Colonic mucosa (tissue), 4 donors: ENCODE measurements at regions of chr3 and their contacts with region 1.

Region 1: GRCh38 chr3:102536456-102536855 is 101.6 kb downstream of the ZPLD1 start:
- DNase-seq: no peak
- H3K4me3 ChIP-seq: no peak overlapping the region
- H3K27ac ChIP-seq: no peak overlapping the region
- H3K4me1 ChIP-seq: no peaks in the 10 kb centered on the region
- H3K27me3 ChIP-seq: no peaks in the 10 kb centered on the region
- CTCF ChIP-seq: peak; percentile 26

Region 2: DNA sequence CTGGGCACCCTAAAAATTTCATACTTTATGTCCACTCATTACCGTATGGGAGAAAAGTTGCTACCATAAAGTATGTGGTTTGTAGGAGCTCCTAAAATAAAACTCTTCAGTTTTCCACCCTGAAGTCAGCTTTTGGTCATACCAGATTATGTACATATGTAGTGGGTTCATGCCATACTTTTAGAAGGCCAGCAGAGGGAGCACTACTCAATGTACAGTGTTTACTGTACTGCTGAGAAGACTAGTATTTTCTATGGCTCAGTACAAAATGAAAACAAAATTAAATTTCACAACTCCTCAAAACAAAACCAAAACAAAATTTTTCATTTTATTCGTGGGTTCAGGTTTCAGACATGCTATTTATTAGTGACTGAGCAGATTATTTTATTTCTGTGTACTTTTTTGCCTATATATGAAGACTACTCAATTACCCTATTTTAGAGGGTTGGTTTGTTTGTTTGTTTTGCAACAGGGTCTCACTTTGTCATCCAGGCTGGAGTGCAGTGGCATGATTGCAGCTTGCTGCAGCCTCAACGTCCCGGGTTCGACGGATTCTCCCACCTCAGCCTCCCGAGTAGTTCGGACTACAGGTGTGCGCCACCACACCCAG is 733.2 kb before region 1 on chr3:
- intact Hi-C with region 1: loop called (anchors 2 kb)
- DNase-seq: peak; percentile 71
- H3K4me3 ChIP-seq: no peak overlapping the region
- H3K27ac ChIP-seq: no peak overlapping the region
- H3K4me1 ChIP-seq: no peaks in the 10 kb centered on the region
- H3K27me3 ChIP-seq: no peaks in the 10 kb centered on the region
- CTCF ChIP-seq: peak; percentile 84